Spleen (tissue), 13 donors: ENCODE measurements at regions of chr16 and their contacts with region 1.

Region 1: GRCh38 chr16:58129097-58129936 is at the start of gene CFAP20:
- DNase-seq: peak; percentile 99
- H3K4me3 ChIP-seq: peak within 1 kb of the TSS; percentile 65 to 94 (median 90)
- H3K27ac ChIP-seq: peak within 1 kb of the TSS; percentile 62 to 92 (median 90)
- H3K4me1 ChIP-seq: peaks cover 30 to 54% (median 48%) of the 10 kb centered on the region in 6 donors
- H3K27me3 ChIP-seq: no peaks in the 10 kb centered on the region
- CTCF ChIP-seq: peak in 2 of 11 experiments; percentile 30 to 42
- POLR2A ChIP-seq: peak in 2 of 3 donors; percentile 48 to 92
- total RNA-seq, gene CFAP20: 21.7 to 51.3 (median 25.3) TPM

Region 2: GRCh38 chr16:57591086-57591869 is 538.0 kb before region 1 on chr16:
- intact Hi-C with region 1: no loop called
- DNase-seq: peak; percentile 89
- H3K4me3 ChIP-seq: no peak overlapping the region
- H3K27ac ChIP-seq: peak overlapping the region in 4 of 8 donors; percentile 25 to 86 (median 72)
- H3K4me1 ChIP-seq: peaks cover 6 to 43% (median 24%) of the 10 kb centered on the region in 6 donors
- H3K27me3 ChIP-seq: peaks cover 0 to 14% (median 0%) of the 10 kb centered on the region in 7 donors
- CTCF ChIP-seq: peak; percentile 80 to 97 (median 88)
- POLR2A ChIP-seq: no peak

Region 3: GRCh38 chr16:58020628-58021139 is 108.6 kb before region 1 on chr16:
- intact Hi-C with region 1: loop called (anchors 5 kb)
- DNase-seq: peak; percentile 79
- H3K4me3 ChIP-seq: no peak overlapping the region
- H3K27ac ChIP-seq: peak overlapping the region in 1 of 8 donors; percentile 21
- H3K4me1 ChIP-seq: peaks cover 6 to 53% (median 35%) of the 10 kb centered on the region in 6 donors
- H3K27me3 ChIP-seq: peaks cover 0 to 19% (median 6%) of the 10 kb centered on the region in 7 donors
- CTCF ChIP-seq: peak; percentile 65 to 91 (median 86)
- POLR2A ChIP-seq: no peak

Region 4: DNA sequence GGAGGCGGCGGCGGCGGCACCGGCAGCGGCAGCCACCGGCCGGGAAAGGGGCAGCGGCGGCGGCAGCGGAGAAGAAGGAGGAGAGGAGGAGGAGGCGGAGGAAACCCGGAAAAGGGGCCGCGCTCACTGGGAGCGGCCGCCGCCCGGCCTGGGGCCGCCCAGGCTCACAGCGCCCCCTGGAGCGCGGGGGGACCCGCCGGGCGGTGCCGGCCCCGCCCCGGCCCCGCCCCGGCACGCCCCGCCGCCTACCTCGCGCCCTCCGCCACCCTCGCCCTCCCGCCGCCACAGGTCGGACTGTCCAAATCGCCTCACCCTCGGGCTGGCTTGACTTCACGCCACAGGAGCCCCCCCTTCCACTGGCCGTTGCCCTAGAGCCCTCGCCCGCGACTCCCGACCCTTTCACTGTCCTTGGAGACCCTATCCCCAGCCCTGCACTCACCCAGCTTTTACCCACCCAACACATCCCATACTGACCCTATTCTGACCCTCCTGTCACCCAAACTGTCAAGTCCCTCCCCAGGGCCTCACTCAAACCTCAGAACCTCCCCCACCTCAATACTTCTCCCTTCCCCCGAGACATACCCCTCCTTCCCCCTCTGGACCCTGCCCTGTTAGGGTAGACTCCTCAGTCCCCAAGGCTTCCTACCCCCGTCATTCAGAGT is 68.8 kb after region 1 on chr16 and contains the start of gene CSNK2A2:
- intact Hi-C with region 1: loop called (anchors 10 kb)
- DNase-seq: peak; percentile 93
- H3K4me3 ChIP-seq: peak within 1 kb of the TSS; percentile 64 to 86 (median 71)
- H3K27ac ChIP-seq: peak within 1 kb of the TSS in 3 of 8 donors; percentile 43 to 62 (median 58)
- H3K4me1 ChIP-seq: peaks cover 13 to 51% (median 33%) of the 10 kb centered on the region in 6 donors
- H3K27me3 ChIP-seq: peaks cover 0 to 5% (median 0%) of the 10 kb centered on the region in 7 donors
- CTCF ChIP-seq: peak in 5 of 11 experiments; percentile 40 to 68 (median 51)
- POLR2A ChIP-seq: no peak
- total RNA-seq, gene CSNK2A2: 35.7 to 62.2 (median 52.7) TPM